Right cardiac atrium (tissue), 5 donors: ENCODE measurements at regions of chr17 and their contacts with region 1.

Region 1: GRCh38 chr17:76182016-76182764 is 41.1 kb upstream of the FOXJ1 start:
- DNase-seq: peak; percentile 82 to 95 (median 93)
- ATAC-seq: peak; percentile 85 to 89
- H3K4me3 ChIP-seq: no peak overlapping the region
- H3K27ac ChIP-seq: no peak overlapping the region
- H3K4me1 ChIP-seq: no peaks in the 10 kb centered on the region
- H3K27me3 ChIP-seq: no peaks in the 10 kb centered on the region

Region 2: DNA sequence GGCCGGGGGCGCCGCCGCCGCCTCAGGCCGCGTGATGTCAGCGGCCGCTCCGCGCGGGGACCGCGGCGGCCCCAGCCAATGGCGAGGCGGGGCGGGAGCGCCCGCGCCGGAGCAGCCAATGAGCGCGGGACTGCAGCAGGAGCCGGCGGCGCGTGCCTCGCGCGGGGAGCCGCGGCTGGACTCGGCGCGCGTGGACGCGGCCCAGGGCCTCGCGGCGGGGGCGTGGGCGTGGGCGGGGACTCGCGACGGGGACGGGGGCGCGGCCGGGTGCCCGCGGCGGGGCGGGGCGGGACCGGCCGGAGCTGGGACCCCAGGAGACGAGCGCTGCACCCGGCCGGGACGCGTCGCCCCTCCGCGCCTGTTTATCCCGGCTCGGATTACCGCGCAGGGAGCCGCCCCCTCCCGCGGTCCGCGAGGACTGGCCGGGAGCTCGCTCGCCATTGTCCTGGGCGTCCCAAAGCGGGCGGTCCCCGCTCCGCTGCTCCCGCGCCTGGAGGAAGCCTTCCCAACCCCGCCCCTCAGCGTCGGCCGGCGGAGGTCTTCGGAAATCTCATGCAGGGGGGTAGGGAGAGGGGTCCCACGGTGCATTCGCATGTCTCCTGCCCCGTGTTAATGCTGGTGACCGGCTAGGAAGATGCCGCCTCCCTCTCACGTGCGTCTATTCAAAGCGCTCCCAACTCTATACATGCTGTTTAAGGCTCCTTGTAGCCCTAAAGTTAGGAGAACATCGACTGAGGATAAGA is 58.4 kb after region 1 on chr17 and contains the start of gene RNF157:
- intact Hi-C with region 1: no loop called
- DNase-seq: peak; percentile 68 to 90 (median 88)
- ATAC-seq: peak; percentile 83 to 88
- H3K4me3 ChIP-seq: peak within 1 kb of the TSS; percentile 95
- H3K27ac ChIP-seq: peak within 1 kb of the TSS; percentile 40
- H3K4me1 ChIP-seq: peaks cover 1% of the 10 kb centered on the region
- H3K27me3 ChIP-seq: no peaks in the 10 kb centered on the region
- total RNA-seq, gene RNF157: 10.2 to 18.8 (median 13.9) TPM

Region 3: GRCh38 chr17:76278952-76279741 is 97.0 kb after region 1 on chr17:
- intact Hi-C with region 1: loop called in 1 of 4 experiments (anchors 2 kb)
- DNase-seq: peak; percentile 88 to 96 (median 96)
- ATAC-seq: peak; percentile 84 to 85
- H3K4me3 ChIP-seq: no peak overlapping the region
- H3K27ac ChIP-seq: no peak overlapping the region
- H3K4me1 ChIP-seq: no peaks in the 10 kb centered on the region
- H3K27me3 ChIP-seq: no peaks in the 10 kb centered on the region

Region 4: GRCh38 chr17:76337413-76337777 is 155.2 kb after region 1 on chr17:
- intact Hi-C with region 1: no loop called
- DNase-seq: no peak
- ATAC-seq: no peak
- H3K4me3 ChIP-seq: no peak overlapping the region
- H3K27ac ChIP-seq: no peak overlapping the region
- H3K4me1 ChIP-seq: no peaks in the 10 kb centered on the region
- H3K27me3 ChIP-seq: no peaks in the 10 kb centered on the region